Heart left ventricle (tissue), 16 donors: ENCODE measurements at regions of chr15 and their contacts with region 1.

Region 1: DNA sequence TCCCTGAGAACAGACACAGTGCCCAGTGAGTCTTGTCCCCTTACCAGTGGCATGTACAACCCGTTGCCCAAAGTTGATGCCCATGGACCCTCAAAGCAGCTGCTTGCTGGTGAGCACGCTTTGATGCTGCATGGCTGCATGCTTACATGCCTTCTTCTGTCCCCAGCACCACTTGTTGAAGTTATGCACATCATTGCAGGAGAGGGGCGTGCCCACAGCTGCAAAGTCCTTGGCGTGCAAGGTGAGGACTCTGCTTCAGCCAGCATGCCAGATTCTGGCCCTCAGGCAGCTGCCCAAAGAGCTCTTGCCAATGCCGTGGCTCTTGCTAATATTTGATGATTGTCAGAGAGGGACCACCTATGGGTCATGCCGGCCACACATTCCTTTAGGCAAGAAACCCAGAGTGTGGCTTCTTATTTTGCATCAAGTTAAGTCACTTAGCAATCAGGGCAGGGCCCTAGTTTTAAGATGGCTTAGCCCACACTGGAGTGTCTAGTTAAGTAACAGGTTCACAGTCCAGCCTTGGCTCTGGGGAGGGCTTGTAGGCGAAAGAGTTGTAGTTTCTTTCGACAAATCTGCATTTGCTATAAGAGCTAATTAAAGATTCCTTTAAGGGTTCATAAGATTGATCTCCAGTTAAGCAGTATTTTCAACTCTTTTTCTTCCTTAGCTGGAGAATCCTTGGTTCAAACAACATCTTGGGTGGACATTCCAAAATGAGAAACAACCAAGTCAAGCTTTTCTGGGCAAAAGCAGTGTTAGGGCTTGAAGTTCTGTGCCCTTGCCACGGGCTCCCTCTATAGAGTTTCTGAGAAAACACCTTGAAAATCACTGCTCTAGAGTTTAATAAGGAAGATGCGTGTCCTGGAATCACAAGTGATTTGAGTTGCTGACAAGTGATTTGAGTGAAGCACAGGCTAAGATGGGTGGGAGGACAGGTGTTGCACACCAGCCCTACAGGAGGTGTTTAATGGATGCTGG is 128.6 kb downstream of the SLCO3A1 start:
- DNase-seq: no peak
- ATAC-seq: no peak
- H3K4me3 ChIP-seq: no peak overlapping the region
- H3K27ac ChIP-seq: peak overlapping the region in 3 of 12 donors; percentile 50 to 82 (median 81)
- H3K4me1 ChIP-seq: peaks cover 2 to 84% (median 38%) of the 10 kb centered on the region in 12 donors
- H3K27me3 ChIP-seq: no peaks in the 10 kb centered on the region
- CTCF ChIP-seq: no peak
- POLR2A ChIP-seq: no peak

Region 2: GRCh38 chr15:92020765-92021164 is 38.7 kb after region 1 on chr15:
- intact Hi-C with region 1: loop called in 2 of 10 experiments (anchors 5 kb)
- DNase-seq: no peak
- ATAC-seq: no peak
- H3K4me3 ChIP-seq: no peak overlapping the region
- H3K27ac ChIP-seq: peak overlapping the region in 1 of 12 donors; percentile 1
- H3K4me1 ChIP-seq: peaks cover 0 to 78% (median 50%) of the 10 kb centered on the region in 12 donors
- H3K27me3 ChIP-seq: no peaks in the 10 kb centered on the region
- CTCF ChIP-seq: no peak
- POLR2A ChIP-seq: no peak

Region 3: GRCh38 chr15:92053840-92054239 is 71.7 kb after region 1 on chr15:
- intact Hi-C with region 1: loop called in 2 of 10 experiments (anchors 5 to 10 kb)
- DNase-seq: no peak
- ATAC-seq: no peak
- H3K4me3 ChIP-seq: no peak overlapping the region
- H3K27ac ChIP-seq: no peak overlapping the region
- H3K4me1 ChIP-seq: peaks cover 0 to 65% (median 36%) of the 10 kb centered on the region in 12 donors
- H3K27me3 ChIP-seq: no peaks in the 10 kb centered on the region
- CTCF ChIP-seq: peak in 5 of 12 donors; percentile 14 to 36 (median 33)
- POLR2A ChIP-seq: no peak

Region 4: GRCh38 chr15:92059056-92059960 is 77.2 kb after region 1 on chr15:
- intact Hi-C with region 1: loop called in 3 of 10 experiments (anchors 5 to 10 kb)
- DNase-seq: peak in 4 of 5 donors; percentile 50 to 79 (median 56)
- ATAC-seq: peak; percentile 53 to 67 (median 62)
- H3K4me3 ChIP-seq: no peak overlapping the region
- H3K27ac ChIP-seq: peak overlapping the region in 9 of 12 donors; percentile 48 to 80 (median 65)
- H3K4me1 ChIP-seq: peaks cover 0 to 68% (median 33%) of the 10 kb centered on the region in 12 donors
- H3K27me3 ChIP-seq: no peaks in the 10 kb centered on the region
- CTCF ChIP-seq: no peak
- POLR2A ChIP-seq: no peak